Activated naive CD4-positive, alpha-beta T cell treated with anti-CD3 and anti-CD28 coated beads, Interleukin-2, amount 10 ng/mL, durations not matched to agents 7 days and 5 days (primary cell): ENCODE measurements at regions of chr11 and their contacts with region 1.

Region 1: GRCh38 chr11:95705485-95706124 is 84.0 kb downstream of the FAM76B start:
- DNase-seq: peak; percentile 92
- H3K4me3 Mint-ChIP-seq: no peak overlapping the region
- H3K27ac Mint-ChIP-seq: no peak overlapping the region
- H3K4me1 Mint-ChIP-seq: peaks cover 14% of the 10 kb centered on the region
- H3K27me3 Mint-ChIP-seq: no peaks in the 10 kb centered on the region

Region 2: GRCh38 chr11:95690100-95690499 is 15.5 kb before region 1 on chr11:
- CTCF ChIA-PET with region 1: interaction called, 16 read pairs
- DNase-seq: no peak
- H3K4me3 Mint-ChIP-seq: no peak overlapping the region
- H3K27ac Mint-ChIP-seq: no peak overlapping the region
- H3K4me1 Mint-ChIP-seq: peaks cover 28% of the 10 kb centered on the region
- H3K27me3 Mint-ChIP-seq: no peaks in the 10 kb centered on the region

Region 3: DNA sequence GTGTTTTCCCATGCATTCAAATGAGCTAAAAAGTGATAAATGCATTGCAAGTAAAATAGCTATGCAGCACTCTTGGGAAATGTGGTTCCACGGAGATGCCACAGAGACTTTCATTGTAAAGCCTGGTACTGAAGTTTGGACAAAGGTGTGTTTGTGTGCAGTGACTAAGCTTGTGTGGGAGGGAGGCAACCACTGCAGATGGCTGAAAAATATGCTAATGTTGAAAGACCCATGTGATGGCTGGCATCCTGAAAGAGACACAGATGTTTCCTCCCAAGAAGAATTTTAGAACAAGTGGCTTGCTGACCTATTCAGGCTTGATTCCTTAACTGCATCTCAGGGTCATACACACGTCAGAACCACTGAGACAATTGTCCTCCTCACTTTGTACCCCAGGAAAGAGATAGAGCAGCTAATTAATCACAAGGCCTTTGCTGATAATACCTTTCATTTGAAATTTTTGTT is 10.2 kb after region 1 on chr11:
- CTCF ChIA-PET with region 1: interaction called, 13 read pairs
- DNase-seq: peak; percentile 27
- H3K4me3 Mint-ChIP-seq: no peak overlapping the region
- H3K27ac Mint-ChIP-seq: no peak overlapping the region
- H3K4me1 Mint-ChIP-seq: peaks cover 30% of the 10 kb centered on the region
- H3K27me3 Mint-ChIP-seq: no peaks in the 10 kb centered on the region